ENCODE measurements at regions of chr19 and their contacts with region 1.

Region 1: DNA sequence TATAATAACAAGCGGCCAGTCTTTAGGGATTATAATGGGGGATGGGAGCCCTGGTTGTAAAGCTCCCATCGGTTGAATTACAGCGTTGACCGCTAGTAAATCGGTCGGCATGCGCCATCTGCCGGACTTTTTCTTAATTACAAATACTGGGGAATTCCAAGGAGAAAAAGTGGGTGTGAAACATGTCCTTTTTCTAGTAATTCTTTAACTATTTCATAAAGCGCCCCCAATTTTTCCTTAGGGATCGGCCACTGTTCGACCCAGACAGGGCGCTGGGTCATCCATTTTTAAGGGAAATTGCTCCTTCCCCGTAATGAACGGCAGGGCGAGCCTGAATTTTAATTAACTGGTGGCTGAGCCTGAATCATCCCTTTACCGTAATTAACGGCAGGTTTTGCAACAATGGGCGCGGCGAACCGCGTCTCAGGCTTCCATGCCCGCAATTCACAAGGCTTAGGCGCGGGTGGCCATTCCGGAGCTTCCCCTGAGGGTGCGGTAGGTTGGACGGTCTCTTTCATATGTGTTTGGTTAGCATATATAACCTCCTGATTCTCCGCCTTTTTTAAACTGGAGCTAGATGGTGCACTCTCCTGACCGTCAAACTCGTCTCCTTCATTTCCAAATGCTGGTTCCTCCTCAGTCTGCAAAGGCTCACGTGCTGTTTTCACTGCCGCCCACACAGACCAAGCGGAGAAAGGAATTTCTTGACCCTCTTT is 30.2 kb upstream of the EVI5L start:
- DNase-seq: peak; percentile 45 to 68 (median 60)
- H3K4me3 ChIP-seq: no peak overlapping the region
- H3K27ac ChIP-seq: no peak overlapping the region
- H3K4me1 ChIP-seq: peaks cover 1% of the 10 kb centered on the region
- H3K27me3 ChIP-seq: no peaks in the 10 kb centered on the region
- CTCF ChIP-seq: peak; percentile 13 to 67 (median 60)
- EP300 ChIP-seq: no peak
- POLR2A ChIP-seq: no peak

Region 2: GRCh38 chr19:7565332-7565731 is 234.5 kb before region 1 on chr19:
- intact Hi-C with region 1: loop called in 2 of 4 experiments (anchors 5 to 10 kb)
- DNase-seq: no peak
- H3K4me3 ChIP-seq: no peak overlapping the region
- H3K27ac ChIP-seq: no peak overlapping the region
- H3K4me1 ChIP-seq: no peaks in the 10 kb centered on the region
- H3K27me3 ChIP-seq: no peaks in the 10 kb centered on the region
- CTCF ChIP-seq: no peak
- EP300 ChIP-seq: no peak
- POLR2A ChIP-seq: no peak

Region 3: DNA sequence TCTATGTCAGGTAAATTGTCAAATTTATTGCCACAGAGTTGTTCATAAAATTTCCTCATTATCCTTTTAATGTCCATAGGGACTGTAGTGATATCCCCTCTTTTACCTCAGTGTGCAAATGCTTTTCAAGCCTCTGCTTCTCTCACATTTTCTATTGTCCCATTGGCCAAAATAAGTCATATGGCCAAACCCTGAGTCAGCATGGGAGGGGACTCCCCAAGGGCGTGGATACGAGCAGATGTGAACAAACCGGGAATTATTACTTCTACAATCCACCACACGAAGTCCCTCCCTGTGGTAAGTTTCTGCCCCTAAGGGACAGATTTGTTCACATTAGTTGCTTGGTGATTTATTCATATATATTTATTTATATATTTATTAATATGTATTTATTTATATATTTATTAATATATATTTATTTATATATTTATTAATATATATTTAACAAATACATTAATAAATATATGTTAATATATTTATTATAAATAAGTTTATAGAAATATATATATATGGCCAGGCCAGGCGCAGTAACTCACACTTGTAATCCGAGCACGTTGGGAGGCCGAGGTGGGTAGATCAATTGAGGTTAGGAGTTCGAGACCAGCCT is 224.3 kb before region 1 on chr19:
- intact Hi-C with region 1: loop called in 1 of 4 experiments (anchors 10 kb)
- DNase-seq: no peak
- H3K4me3 ChIP-seq: no peak overlapping the region
- H3K27ac ChIP-seq: no peak overlapping the region
- H3K4me1 ChIP-seq: no peaks in the 10 kb centered on the region
- H3K27me3 ChIP-seq: no peaks in the 10 kb centered on the region
- CTCF ChIP-seq: no peak
- EP300 ChIP-seq: no peak
- POLR2A ChIP-seq: no peak

Region 4: GRCh38 chr19:7641288-7642276 is 158.2 kb before region 1 on chr19:
- intact Hi-C with region 1: loop called in 1 of 4 experiments (anchors 10 kb)
- DNase-seq: no peak
- H3K4me3 ChIP-seq: no peak overlapping the region
- H3K27ac ChIP-seq: no peak overlapping the region
- H3K4me1 ChIP-seq: no peaks in the 10 kb centered on the region
- H3K27me3 ChIP-seq: no peaks in the 10 kb centered on the region
- CTCF ChIP-seq: no peak
- EP300 ChIP-seq: no peak
- POLR2A ChIP-seq: no peak

Region 5: DNA sequence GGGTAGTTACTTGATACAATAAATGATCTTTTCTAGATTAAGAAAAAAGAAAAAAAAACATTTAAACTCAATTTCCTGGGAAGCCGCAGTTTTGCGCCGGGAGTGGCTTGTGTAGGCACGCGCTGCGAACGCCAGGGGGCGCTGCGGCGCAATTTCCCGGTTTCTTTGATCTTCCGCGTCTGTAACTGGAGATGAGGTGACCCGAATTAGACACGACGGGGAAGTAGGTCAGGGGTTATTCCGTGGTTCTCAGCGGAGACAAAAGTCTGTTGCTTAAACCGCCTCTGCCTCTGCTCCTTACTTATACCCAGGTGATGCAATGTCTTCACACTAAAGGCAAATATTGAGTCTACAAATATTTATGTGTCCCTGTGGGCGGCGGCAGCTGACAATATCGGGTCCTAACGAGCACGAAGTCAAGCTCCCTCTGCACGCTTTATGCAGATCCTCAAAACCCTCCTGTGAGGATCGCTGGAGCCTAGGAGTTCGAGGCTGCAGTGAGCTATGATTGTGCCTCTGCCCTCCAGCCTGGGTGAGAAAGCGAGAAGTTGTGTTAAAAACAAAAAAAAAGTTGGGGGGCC is 147.6 kb before region 1 on chr19:
- intact Hi-C with region 1: loop called in 2 of 4 experiments (anchors 5 to 10 kb)
- DNase-seq: peak; percentile 60 to 89 (median 81)
- H3K4me3 ChIP-seq: no peak overlapping the region
- H3K27ac ChIP-seq: no peak overlapping the region
- H3K4me1 ChIP-seq: no peaks in the 10 kb centered on the region
- H3K27me3 ChIP-seq: no peaks in the 10 kb centered on the region
- CTCF ChIP-seq: peak; percentile 82 to 90 (median 84)
- EP300 ChIP-seq: no peak
- POLR2A ChIP-seq: no peak

Measured in ovary (tissue), 10 donors.